Heart right ventricle (tissue), 16 donors: ENCODE measurements at regions of chr5 and their contacts with region 1.

Region 1: GRCh38 chr5:144040615-144041305 is 129.7 kb downstream of the YIPF5 start:
- DNase-seq: no peak
- ATAC-seq: no peak
- H3K4me3 ChIP-seq: no peak overlapping the region
- H3K27ac ChIP-seq: no peak overlapping the region
- H3K4me1 ChIP-seq: no peaks in the 10 kb centered on the region
- H3K27me3 ChIP-seq: no peaks in the 10 kb centered on the region
- CTCF ChIP-seq: no peak

Region 2: GRCh38 chr5:143874312-143874711 is 166.4 kb before region 1 on chr5:
- intact Hi-C with region 1: no loop called
- DNase-seq: no peak
- ATAC-seq: peak in 1 of 8 donors; percentile 64
- H3K4me3 ChIP-seq: no peak overlapping the region
- H3K27ac ChIP-seq: no peak overlapping the region
- H3K4me1 ChIP-seq: no peaks in the 10 kb centered on the region
- H3K27me3 ChIP-seq: no peaks in the 10 kb centered on the region
- CTCF ChIP-seq: no peak

Region 3: DNA sequence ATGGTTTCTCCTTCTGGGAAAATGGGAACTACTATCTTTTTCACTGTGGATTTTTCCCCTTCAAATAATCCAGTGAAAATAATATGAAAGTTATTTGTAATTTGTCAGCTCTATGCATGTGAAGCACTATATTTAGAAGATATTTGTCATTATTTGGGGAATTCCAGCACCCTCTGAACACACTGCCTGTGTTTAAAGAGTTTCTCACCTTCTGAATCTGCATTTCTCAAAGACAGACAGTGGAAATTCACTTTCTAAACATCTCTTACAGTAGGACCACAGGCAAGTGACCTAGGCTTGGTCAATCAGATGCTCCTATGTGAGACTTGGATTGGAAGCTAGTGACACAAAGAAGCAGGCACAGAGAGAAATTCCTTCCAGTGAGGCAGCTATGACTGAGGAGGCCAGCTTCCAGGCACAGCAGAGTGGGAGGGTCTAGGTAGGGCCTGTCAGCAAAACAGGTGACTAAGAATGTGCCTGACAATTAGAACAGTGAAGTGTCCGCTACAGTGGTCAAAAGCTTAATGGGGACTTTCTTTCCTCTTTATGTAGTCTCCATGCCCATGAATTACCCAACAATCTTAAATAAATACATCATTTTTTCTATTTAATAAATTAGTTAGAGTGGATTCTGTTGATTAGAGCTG is 61.6 kb before region 1 on chr5:
- intact Hi-C with region 1: no loop called
- DNase-seq: no peak
- ATAC-seq: no peak
- H3K4me3 ChIP-seq: no peak overlapping the region
- H3K27ac ChIP-seq: no peak overlapping the region
- H3K4me1 ChIP-seq: no peaks in the 10 kb centered on the region
- H3K27me3 ChIP-seq: no peaks in the 10 kb centered on the region
- CTCF ChIP-seq: no peak

Region 4: GRCh38 chr5:144060598-144060997 is 19.8 kb after region 1 on chr5:
- intact Hi-C with region 1: loop called in 1 of 10 experiments (anchors 1 kb)
- DNase-seq: no peak
- ATAC-seq: no peak
- H3K4me3 ChIP-seq: no peak overlapping the region
- H3K27ac ChIP-seq: no peak overlapping the region
- H3K4me1 ChIP-seq: no peaks in the 10 kb centered on the region
- H3K27me3 ChIP-seq: no peaks in the 10 kb centered on the region
- CTCF ChIP-seq: no peak

Region 5: DNA sequence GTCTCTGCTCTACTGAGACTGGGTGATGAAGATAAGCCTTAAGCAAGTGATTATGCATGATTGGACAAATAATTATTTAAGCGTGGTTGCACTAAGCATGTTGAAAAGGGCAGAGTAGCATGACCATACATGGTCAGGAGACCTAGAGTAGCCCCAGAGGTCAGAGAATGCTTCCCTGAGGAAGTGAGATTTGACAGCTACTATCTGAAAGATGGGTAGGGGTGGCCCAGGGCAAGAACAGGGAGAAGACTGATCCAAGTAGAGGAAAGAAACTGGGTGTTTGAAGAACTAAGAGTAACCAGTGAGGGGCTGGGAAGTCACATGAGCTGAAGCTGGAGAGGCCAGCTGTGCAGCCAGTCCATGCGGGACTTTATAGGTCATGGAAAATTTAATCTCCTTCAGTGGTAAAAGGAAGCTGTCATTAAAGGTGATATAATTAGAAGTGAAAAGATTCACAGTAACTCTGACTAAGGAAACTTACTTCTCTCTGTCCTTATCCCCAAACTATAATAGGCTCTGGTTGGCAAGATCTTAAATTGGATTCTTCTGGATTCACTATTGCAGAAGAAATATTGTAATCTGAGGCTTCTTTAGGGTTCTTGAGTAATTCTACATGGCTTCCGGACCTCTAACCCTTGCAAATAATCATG is 94.5 kb after region 1 on chr5:
- intact Hi-C with region 1: no loop called
- DNase-seq: no peak
- ATAC-seq: peak in 2 of 8 donors; percentile 54 to 66
- H3K4me3 ChIP-seq: no peak overlapping the region
- H3K27ac ChIP-seq: peak overlapping the region in 3 of 10 donors; percentile 32 to 49 (median 46)
- H3K4me1 ChIP-seq: peaks cover 0 to 13% (median 0%) of the 10 kb centered on the region in 9 donors
- H3K27me3 ChIP-seq: no peaks in the 10 kb centered on the region
- CTCF ChIP-seq: no peak